ENCODE measurements at regions of chr11 and their contacts with region 1.

Region 1: DNA sequence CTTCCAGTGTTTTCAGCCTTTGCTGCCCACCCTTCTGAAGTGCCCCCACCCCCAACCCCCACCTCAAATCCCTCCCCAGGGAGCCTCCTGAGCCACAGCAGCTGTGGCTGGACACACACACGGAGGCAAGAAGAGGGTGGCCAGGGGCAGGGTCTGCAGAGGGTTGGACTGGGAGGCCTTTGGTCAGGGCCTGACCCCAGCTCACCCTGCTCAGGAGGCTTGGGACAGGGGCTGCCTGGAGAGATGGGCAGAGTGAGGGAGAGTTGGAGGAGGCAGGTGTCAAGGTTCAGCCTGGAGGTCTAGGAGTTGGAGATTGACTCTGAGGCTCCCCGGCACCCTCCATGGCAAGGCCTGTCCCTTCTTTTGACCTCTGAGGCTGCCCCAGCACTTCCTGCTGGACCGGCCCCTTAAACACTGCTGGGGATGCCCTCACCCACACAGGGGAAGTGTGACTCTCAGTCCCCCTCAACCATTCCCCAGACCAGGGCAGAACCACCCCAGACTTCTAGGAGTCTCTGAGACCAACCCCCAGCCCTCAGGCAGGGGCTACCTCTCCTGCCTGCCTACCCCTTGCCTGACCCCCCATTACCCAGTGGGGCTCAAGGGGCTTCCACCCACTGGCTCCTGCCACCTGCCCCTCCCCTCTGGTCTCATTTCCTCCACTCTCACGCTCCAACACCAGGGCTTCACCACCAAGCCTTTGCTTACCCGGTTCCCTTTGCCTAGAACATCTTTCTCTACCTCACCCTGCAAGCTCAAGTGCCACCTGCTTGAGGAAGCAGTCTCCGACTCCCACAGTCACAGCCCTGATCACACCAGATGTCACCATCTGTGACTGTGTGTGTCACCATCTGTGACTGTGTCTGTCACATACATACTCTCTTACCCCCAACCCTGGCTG is 8.6 kb downstream of the ARAP1 start:
- DNase-seq: peak in 2 of 5 donors; percentile 19 to 44
- ATAC-seq: no peak
- H3K4me3 ChIP-seq: no peak overlapping the region
- H3K27ac ChIP-seq: no peak overlapping the region
- H3K4me1 ChIP-seq: peaks cover 0 to 63% (median 17%) of the 10 kb centered on the region in 12 donors
- H3K27me3 ChIP-seq: no peaks in the 10 kb centered on the region
- CTCF ChIP-seq: no peak
- POLR2A ChIP-seq: no peak

Region 2: GRCh38 chr11:72613977-72614376 is 129.6 kb before region 1 on chr11:
- intact Hi-C with region 1: no loop called
- DNase-seq: peak in 3 of 5 donors; percentile 47 to 64 (median 53)
- ATAC-seq: peak in 2 of 4 donors; percentile 41 to 45
- H3K4me3 ChIP-seq: no peak overlapping the region
- H3K27ac ChIP-seq: no peak overlapping the region
- H3K4me1 ChIP-seq: peaks cover 0 to 54% (median 25%) of the 10 kb centered on the region in 12 donors
- H3K27me3 ChIP-seq: peaks cover 0 to 28% (median 0%) of the 10 kb centered on the region in 9 donors
- CTCF ChIP-seq: no peak
- POLR2A ChIP-seq: no peak

Region 3: DNA sequence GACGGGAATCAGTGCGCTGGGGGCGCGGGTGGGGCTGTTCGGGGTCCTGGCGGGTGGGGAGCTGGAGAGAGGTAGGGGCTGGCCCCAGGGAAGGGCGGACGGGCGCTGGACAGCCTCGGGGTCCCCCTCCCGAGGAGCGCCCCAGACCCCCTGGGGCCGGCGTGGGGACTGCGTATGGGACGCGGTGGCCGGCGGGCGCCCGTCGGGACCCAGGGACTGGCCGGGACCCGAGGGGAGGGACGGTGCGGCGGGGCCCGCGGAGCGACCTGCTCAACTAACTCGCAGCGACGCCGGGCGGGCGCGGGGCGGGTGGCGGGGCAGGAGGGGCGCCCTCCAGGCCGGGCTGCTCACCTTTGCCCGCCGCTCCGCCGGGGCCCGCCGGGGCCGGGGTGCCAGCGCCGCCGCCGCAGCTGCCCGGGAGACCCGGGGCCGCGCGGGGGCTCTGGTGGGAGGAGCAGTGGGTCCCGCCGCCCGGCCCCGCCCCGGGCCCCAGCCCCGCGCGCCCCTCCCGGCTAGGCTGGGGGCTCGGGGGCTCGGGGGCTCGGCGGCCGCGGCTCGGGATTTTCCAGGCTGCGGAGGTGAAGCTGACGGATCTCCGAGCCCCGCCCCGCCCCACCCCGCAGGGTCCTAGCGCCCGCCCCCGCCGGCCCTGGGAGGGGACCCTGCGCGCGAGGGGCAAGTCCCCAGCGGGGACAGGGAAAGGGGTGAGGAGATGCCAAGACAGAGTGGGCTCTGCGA is 37.9 kb after region 1 on chr11:
- intact Hi-C with region 1: loop called in 2 of 10 experiments (anchors 5 kb)
- DNase-seq: peak in 1 of 5 donors; percentile 52
- ATAC-seq: peak in 3 of 4 donors; percentile 23 to 45 (median 27)
- H3K4me3 ChIP-seq: peak overlapping the region; percentile 44 to 86 (median 65)
- H3K27ac ChIP-seq: peak overlapping the region in 3 of 12 donors; percentile 23 to 67 (median 45)
- H3K4me1 ChIP-seq: peaks cover 0 to 40% (median 30%) of the 10 kb centered on the region in 12 donors
- H3K27me3 ChIP-seq: no peaks in the 10 kb centered on the region
- CTCF ChIP-seq: no peak
- POLR2A ChIP-seq: no peak